KBM-7 (cell line): ENCODE measurements at regions of chr3 and their contacts with region 1.

Region 1: DNA sequence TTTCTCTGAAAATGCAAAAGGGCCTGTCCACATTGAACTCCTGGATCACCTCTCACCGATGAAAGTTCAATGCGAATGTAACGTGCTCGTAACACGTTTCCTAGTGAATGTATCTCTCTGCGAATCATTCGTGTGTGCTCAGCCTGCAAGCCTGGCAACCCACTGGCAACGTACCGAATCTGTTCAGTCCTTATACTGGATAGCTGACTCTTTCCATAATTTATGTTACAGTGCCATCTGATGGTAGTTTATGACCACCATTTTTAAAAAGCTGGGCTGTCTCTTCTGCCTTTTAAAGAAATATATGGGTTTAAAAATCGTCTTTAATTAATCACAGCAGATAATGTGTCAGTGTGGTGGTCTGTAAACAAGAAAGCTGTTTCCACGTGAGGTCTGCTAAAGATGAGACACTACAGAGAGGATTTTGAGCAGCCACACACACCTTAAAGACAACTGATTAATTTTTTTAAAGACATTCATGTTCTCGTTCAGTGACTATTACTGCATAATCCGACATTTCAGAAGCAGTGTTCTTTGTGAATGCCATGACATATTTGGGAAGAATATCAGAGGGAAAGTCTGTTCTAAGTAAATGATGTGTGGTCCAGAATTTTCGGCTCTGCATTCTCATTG is 69.4 kb upstream of the FOXP1 start:
- DNase-seq: peak; percentile 65

Region 2: DNA sequence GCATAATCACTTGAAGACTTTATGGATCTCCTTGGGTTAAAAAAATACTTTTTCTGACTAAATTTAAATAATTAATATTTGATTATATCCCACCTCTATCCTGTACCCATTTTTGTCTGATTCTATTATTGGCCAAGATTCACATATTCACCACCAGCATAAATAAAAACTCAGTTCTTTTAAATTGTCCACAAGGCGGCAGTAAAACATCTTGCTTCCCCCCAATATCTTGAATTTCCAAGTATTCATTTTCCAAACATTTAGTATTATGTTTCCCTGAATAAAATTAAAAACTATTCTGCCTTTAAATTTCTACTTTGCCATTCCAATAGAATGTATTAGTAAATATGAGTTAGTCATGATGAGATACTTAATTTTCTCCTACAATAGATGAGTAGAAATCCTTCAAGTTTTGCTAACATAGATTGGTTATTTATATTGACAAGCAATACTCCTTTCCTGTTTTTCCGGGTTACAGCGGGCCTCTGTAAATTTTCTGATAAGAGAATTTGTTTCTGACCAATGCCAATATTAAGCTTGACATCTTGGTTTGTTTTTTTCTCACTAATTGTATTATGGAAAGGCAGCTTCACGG is 1121.7 kb before region 1 on chr3:
- in situ Hi-C with region 1: loop called (anchors 25 kb)
- DNase-seq: peak; percentile 58

Region 3: DNA sequence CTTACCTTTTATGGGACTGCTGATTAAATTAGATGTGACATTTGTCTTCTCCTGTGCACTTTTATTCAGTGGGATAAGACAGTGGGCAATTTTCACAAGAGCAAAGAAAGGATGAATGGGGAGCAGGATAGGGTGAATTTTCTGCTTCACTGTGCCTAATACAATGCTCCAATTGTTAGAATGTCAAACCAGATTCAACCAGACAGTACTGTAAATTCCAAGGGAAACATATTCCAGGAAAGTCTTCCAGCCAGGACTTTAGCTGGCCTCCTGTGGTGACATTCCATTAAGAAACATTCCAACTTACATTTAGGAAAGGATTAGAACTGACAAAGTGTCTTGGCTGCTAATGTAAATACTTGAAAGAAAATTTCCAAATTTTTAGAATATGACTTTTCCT is 232.1 kb after region 1 on chr3:
- in situ Hi-C with region 1: no loop called
- DNase-seq: no peak

Region 4: GRCh38 chr3:72009851-72010443 is 357.1 kb after region 1 on chr3:
- in situ Hi-C with region 1: no loop called
- DNase-seq: no peak

Region 5: GRCh38 chr3:72109327-72110259 is 456.7 kb after region 1 on chr3:
- in situ Hi-C with region 1: no loop called
- DNase-seq: no peak